Ovary (tissue), 10 donors: ENCODE measurements at regions of chr15 and their contacts with region 1.

Region 1: GRCh38 chr15:43893956-43894355 is 67.2 kb downstream of the WDR76 start:
- DNase-seq: no peak
- H3K4me3 ChIP-seq: no peak overlapping the region
- H3K27ac ChIP-seq: no peak overlapping the region
- H3K4me1 ChIP-seq: peaks cover 2% of the 10 kb centered on the region
- H3K27me3 ChIP-seq: no peaks in the 10 kb centered on the region
- CTCF ChIP-seq: no peak
- EP300 ChIP-seq: no peak
- POLR2A ChIP-seq: no peak

Region 2: GRCh38 chr15:44222478-44222877 is 328.5 kb after region 1 on chr15:
- intact Hi-C with region 1: loop called in 1 of 4 experiments (anchors 10 kb)
- DNase-seq: no peak
- H3K4me3 ChIP-seq: no peak overlapping the region
- H3K27ac ChIP-seq: no peak overlapping the region
- H3K4me1 ChIP-seq: no peaks in the 10 kb centered on the region
- H3K27me3 ChIP-seq: no peaks in the 10 kb centered on the region
- CTCF ChIP-seq: no peak
- EP300 ChIP-seq: no peak
- POLR2A ChIP-seq: no peak